Vagina (tissue), 2 donors: ENCODE measurements at regions of chr17 and their contacts with region 1.

Region 1: DNA sequence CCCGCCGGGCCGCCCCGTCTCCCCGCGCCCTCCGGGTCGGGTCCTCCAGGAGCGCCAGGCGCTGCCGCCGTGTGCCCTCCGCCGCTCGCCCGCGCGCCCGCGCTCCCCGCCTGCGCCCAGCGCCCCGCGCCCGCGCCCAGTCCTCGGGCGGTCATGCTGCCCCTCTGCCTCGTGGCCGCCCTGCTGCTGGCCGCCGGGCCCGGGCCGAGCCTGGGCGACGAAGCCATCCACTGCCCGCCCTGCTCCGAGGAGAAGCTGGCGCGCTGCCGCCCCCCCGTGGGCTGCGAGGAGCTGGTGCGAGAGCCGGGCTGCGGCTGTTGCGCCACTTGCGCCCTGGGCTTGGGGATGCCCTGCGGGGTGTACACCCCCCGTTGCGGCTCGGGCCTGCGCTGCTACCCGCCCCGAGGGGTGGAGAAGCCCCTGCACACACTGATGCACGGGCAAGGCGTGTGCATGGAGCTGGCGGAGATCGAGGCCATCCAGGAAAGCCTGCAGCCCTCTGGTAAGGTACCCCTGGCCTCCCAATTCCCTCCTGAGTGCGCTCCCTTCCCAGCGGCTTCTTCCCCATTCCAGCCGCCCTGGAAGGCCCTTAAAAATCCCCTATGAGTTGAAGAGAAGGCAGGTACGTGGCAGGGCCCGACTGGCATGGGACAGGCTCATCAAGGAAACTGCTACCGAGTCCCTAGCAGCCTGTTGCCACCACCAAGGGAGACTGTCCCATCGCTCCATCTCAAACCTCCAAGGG is 505 bp downstream of the IGFBP4 start:
- DNase-seq: no peak
- H3K4me3 ChIP-seq: peak overlapping the region; percentile 84 to 89
- H3K27ac ChIP-seq: peak overlapping the region; percentile 87
- H3K4me1 ChIP-seq: peaks cover 54% of the 10 kb centered on the region
- H3K27me3 ChIP-seq: no peaks in the 10 kb centered on the region
- CTCF ChIP-seq: peak in 1 of 3 experiments; percentile 7
- POLR2A ChIP-seq: no peak

Region 2: DNA sequence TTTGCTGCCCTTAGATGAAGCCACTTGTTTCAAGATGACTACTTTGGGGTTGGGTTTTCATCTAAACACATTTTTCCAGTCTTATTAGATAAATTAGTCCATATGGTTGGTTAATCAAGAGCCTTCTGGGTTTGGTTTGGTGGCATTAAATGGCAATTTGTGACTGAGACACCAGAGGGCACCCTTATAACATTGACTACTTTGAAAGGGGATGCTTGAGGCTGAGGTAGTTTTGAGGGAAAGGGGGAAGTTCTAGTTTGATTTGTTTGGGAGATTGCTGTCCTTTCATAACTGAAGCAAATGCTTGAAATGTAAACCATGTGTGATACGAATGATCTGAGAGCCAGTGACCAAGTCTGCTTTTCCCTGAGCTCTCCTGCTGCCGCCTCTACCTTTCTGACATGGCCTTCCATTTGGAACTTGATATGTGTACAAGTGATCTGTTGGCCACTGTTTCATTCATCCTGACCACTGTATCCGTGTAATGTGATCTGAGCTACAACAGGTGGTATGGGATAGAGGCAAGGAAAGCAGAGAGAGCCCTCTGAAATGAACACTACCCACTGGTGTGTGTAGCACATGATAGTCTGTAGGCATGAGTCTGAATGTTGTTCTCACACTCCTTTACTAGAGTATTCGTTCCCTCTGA is 140.6 kb before region 1 on chr17:
- intact Hi-C with region 1: loop called (anchors 10 kb)
- DNase-seq: no peak
- H3K4me3 ChIP-seq: no peak overlapping the region
- H3K27ac ChIP-seq: peak overlapping the region; percentile 52
- H3K4me1 ChIP-seq: peaks cover 58% of the 10 kb centered on the region
- H3K27me3 ChIP-seq: no peaks in the 10 kb centered on the region
- CTCF ChIP-seq: peak; percentile 65 to 88 (median 88)
- POLR2A ChIP-seq: no peak

Region 3: GRCh38 chr17:40479533-40480480 is 36.1 kb after region 1 on chr17:
- intact Hi-C with region 1: loop called (anchors 5 kb)
- DNase-seq: no peak
- H3K4me3 ChIP-seq: no peak overlapping the region
- H3K27ac ChIP-seq: peak overlapping the region; percentile 51
- H3K4me1 ChIP-seq: peaks cover 65% of the 10 kb centered on the region
- H3K27me3 ChIP-seq: no peaks in the 10 kb centered on the region
- CTCF ChIP-seq: no peak
- POLR2A ChIP-seq: no peak

Region 4: DNA sequence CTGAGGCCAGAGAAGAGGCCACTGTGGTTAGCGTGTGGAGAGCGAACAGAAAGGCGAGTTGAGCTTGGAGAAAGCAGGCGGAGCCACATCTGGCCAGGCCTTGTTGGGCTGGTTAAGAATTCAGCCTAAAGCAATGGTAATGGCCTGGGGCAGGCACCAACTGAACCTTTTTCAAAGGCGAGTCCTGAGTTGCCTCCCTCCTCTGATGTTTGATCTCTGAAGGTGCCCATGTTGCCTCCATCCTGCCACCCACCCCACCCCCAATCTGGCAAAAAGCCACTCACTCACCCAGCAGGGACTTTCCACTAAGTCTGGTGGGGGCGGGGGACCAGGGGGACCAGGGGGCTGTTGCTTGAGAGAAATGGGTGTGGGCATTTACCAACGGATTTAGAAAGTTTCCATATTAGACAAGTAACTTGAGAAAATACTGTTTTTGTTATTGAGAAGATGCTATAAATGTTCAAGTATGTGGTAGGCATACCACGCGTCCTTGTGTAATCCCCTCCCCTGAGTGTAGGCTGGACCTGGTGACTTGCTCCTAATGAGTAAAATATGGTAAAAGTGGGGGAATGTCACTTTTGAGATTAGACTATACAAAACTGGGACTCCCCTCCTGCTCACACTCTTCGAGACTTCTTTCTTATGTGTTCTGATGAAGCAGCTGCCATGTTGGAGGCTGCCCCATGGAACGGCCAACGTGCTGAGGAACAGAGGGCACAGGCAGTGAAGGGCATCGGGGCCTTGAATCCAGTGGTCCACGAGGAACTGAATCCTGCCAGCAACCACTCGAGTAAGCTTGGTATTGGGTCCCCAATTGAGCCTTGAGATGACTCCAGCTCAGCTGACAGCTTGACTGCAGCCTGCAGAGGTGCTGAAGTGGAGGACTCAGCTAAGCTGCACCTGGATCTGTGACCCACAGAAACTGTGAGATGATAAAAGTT is 87.6 kb after region 1 on chr17:
- intact Hi-C with region 1: loop called (anchors 5 kb)
- DNase-seq: no peak
- H3K4me3 ChIP-seq: no peak overlapping the region
- H3K27ac ChIP-seq: peak overlapping the region; percentile 8
- H3K4me1 ChIP-seq: peaks cover 54% of the 10 kb centered on the region
- H3K27me3 ChIP-seq: no peaks in the 10 kb centered on the region
- CTCF ChIP-seq: no peak
- POLR2A ChIP-seq: no peak

Region 5: DNA sequence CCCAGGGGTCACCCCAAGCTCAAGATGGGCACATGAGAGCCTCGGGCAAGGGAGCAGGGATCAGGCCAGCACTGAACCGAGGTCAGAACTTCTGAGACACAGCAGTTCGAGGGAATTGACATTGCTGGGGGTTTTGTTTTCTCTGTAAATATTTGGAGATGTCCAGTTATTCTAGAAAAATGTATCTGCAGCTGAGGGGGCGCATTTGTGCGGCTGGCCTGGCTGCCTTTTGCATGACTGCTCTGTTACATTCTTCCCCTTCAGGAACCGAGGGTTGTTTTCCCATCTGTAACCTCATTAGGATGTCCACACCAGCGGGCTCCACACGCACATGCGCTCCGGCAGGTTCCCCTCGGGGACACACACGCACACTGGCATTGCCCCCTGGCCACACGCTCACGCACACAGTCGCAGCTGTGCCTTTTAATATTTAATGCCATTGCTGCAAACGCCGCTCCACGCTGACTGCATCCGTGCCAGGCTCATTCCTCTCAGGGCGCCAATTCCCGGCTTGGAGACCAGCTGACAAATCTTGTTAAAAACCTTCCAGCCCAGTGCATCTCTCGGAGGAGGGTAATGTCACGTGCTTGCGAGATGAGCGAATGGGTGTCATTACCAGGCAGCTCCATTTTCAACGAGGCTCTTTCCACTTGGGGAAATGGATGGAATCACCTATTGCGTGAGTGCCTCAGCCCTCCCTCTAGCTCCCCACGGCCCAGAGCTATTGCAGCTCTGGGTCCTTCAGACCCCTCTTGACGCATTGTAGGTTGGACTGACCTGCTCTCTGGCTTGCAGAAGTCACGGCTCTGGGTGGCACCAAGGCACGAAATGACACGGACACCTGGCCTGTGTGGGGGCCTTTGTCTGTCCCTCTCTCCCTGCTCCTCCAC is 108.4 kb after region 1 on chr17:
- intact Hi-C with region 1: loop called (anchors 5 kb)
- DNase-seq: peak in 1 of 2 donors; percentile 89
- H3K4me3 ChIP-seq: no peak overlapping the region
- H3K27ac ChIP-seq: peak overlapping the region; percentile 88
- H3K4me1 ChIP-seq: peaks cover 95% of the 10 kb centered on the region
- H3K27me3 ChIP-seq: no peaks in the 10 kb centered on the region
- CTCF ChIP-seq: no peak
- POLR2A ChIP-seq: peak in 1 of 2 donors; percentile 11